ENCODE measurements at regions of chr14 and their contacts with region 1.

Region 1: DNA sequence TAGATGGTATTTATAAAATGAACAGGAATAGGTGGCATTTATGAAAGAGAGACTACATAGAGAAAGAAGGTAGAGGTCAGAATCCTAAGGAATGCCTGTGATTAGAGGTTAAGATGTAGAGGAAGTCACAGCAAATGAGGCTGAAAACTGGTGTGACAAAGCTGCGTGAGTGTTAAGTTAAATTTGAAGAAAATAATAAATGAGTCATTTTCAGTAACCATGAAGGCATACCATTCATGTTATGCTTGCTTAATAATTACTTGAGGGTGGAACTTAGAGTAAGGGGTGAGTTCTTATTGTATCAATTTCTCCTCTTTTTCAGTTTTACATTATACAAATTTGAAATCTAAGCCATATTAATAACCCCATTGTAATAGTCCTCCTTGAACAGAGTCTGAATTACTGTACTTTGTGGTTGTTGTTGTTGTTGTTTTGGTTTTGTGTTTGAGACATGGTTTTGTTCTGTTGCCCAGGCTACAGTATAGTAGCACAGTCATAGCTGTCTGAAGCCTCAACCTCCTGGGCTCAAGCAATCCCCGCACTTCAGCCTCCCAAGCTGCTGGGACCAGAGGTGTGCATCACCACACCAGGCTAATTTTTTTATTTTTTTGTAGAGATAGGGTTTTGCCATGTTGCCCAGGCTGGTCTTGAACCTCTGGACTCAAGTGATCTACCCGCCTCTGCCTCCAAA is 761.5 kb downstream of the GALC start:
- DNase-seq: no peak
- H3K4me3 Mint-ChIP-seq: no peak overlapping the region
- H3K27ac Mint-ChIP-seq: peak overlapping the region; percentile 6
- H3K4me1 Mint-ChIP-seq: no peaks in the 10 kb centered on the region
- H3K27me3 Mint-ChIP-seq: no peaks in the 10 kb centered on the region
- CTCF ChIP-seq: no peak

Region 2: DNA sequence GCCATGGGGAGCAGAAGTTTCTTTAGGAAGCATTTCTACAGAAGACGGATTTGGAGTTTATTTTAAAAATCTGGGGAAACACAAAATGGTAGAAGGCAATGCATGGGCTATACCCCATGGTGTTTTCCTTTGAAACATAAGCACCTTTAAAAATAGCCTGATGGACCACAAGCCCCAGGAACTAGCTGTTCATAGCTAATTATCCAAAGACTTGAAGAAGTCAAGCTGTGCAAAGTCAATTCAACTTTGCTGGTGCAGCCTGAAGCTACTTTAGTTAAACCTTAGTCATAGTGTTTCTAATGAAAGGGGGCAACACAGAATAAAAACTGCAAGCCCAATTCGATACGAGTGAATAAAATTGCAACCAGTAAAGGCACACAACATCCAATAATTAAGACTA is 29.0 kb after region 1 on chr14:
- CTCF ChIA-PET with region 1: no interaction called
- intact Hi-C with region 1: loop called (anchors 1 kb)
- DNase-seq: no peak
- H3K4me3 Mint-ChIP-seq: no peak overlapping the region
- H3K27ac Mint-ChIP-seq: no peak overlapping the region
- H3K4me1 Mint-ChIP-seq: no peaks in the 10 kb centered on the region
- H3K27me3 Mint-ChIP-seq: no peaks in the 10 kb centered on the region
- CTCF ChIP-seq: no peak